Activated B cell treated with CpG ODN at 0.5 μM for 24 hours (primary cell): ENCODE measurements at regions of chr1 and their contacts with region 1.

Region 1: DNA sequence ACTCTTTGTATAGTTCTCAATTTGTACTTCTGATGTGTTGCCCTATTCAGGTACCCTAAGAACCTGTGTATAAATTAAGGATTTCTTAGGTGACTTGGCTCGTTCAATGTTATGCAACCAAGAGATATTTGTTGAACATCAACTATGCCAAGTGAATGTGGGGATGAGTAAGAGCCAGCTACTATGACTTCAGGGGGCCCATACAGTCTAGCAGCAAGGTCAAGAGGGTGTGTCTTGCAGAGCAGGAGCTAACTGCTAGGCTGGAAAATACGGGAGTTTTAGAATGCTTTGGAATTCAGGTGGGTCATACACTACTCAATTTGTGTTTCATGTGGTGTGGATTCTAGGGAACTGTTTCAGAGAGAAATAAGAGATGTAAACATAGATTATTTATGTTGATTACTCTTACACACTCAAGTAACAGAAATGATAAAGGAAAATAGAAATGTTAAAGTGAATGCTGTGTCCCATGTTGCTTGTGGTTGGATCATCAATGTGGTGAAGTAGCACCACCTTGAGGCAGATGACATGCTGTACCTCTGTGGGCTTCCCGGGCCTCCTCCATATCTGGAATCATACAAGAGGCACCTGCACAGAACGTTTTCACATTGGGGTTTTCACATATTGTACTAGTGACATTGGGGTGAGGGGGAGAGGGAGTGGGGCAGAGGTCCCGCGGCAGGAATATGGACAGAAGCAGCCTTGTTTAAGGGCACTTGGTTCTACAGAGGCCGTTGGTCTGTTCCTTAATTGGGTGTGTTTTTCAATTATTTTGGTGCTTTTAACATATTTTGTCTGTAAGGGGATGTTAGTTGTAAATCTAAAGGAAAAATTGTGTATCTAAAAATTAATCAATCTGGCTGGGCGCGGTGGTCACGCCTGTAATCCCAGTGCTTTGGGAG is 12.4 kb downstream of the ARPC5 start:
- DNase-seq: peak; percentile 20
- ATAC-seq: peak; percentile 94
- H3K4me3 Mint-ChIP-seq: no peak overlapping the region
- H3K27ac Mint-ChIP-seq: peak overlapping the region; percentile 50
- H3K4me1 Mint-ChIP-seq: peaks cover 26% of the 10 kb centered on the region
- H3K27me3 Mint-ChIP-seq: no peaks in the 10 kb centered on the region
- CTCF ChIP-seq: no peak

Region 2: DNA sequence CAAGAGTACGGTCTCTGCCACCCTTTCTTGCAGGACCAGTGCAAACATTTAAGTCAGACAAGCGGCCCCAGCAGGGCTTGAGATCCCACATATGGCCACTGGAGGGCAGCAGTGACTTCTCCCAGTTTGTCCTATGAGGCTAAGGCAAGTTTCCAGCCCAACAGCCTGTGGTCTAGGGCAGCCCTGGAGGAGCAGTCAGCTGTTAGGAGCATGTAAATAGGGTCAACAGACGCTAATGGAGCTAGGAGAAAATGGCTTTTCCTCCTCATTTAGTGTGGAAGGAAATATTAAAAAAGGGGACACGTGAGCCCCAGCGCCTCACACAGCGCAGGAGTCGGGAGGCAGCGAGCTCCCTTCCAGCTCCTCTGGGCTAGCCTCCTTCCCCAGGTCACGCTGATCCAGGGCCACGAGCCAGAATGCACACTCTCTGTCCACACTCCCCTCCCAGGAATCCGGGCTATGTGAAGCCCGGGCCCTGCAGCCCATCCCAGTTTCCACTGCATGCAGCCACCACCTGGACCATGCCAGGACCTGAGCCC is 341.5 kb before region 1 on chr1:
- CTCF ChIA-PET with region 1: interaction called, 3 read pairs
- POLR2A ChIA-PET with region 1: no interaction called
- intact Hi-C with region 1: loop called (anchors 1 kb)
- DNase-seq: peak; percentile 57
- ATAC-seq: peak; percentile 67
- H3K4me3 Mint-ChIP-seq: no peak overlapping the region
- H3K27ac Mint-ChIP-seq: no peak overlapping the region
- H3K4me1 Mint-ChIP-seq: no peaks in the 10 kb centered on the region
- H3K27me3 Mint-ChIP-seq: peaks cover 17% of the 10 kb centered on the region
- CTCF ChIP-seq: peak; percentile 63

Region 3: DNA sequence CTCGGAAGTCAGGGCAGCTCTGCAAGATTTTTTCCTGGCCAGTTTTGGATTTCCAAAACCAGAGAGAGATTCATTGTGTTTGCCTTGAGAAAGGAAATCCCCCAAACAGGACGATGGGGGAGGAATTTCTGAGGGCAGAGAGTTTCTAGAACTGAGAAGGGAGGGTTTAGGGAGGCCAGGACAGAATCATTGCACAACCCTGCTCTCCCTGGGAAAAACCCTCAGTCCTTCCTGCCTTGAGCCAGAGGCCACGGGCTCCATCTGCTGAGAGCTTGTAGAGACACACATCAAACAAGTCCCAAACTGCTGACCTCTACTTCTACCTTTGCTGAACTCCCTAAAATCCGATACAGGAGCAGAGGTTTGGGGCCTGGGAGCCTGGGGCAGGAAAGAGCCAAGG is 304.7 kb before region 1 on chr1:
- CTCF ChIA-PET with region 1: no interaction called
- POLR2A ChIA-PET with region 1: no interaction called
- intact Hi-C with region 1: no loop called
- DNase-seq: no peak
- ATAC-seq: no peak
- H3K4me3 Mint-ChIP-seq: no peak overlapping the region
- H3K27ac Mint-ChIP-seq: no peak overlapping the region
- H3K4me1 Mint-ChIP-seq: no peaks in the 10 kb centered on the region
- H3K27me3 Mint-ChIP-seq: peaks cover 20% of the 10 kb centered on the region
- CTCF ChIP-seq: no peak

Region 4: DNA sequence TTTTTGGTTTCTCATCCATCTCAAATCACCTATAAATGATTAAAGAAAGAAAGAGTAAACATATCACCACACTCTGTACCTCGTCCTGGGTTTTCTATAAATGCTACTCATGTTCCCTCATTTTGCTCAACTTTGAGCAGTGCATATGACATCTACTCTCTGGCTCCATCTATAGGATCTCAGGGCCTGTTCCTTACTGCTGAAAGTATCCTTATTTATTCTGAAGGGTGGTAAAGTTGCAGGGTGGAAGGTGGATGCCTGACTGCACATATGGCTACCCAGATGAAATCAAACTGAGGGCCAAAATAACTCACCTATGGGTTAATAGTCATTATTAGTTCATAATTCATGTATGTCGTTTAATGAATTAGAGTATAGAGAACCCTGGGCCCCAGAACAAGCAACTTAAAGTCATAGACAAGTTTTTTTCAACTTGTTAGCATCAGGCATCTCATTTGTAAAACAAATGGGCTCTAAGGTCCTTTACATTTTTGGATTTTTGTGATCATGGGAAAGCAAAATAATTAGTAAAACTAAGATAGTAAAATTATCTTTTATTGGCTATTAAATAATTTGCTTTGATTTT is 79.4 kb before region 1 on chr1:
- CTCF ChIA-PET with region 1: interaction called, 4 read pairs
- POLR2A ChIA-PET with region 1: no interaction called
- intact Hi-C with region 1: loop called (anchors 1 kb)
- DNase-seq: no peak
- ATAC-seq: peak; percentile 71
- H3K4me3 Mint-ChIP-seq: no peak overlapping the region
- H3K27ac Mint-ChIP-seq: no peak overlapping the region
- H3K4me1 Mint-ChIP-seq: peaks cover 30% of the 10 kb centered on the region
- H3K27me3 Mint-ChIP-seq: no peaks in the 10 kb centered on the region
- CTCF ChIP-seq: no peak

Region 5: GRCh38 chr1:183554577-183554976 is 68.6 kb before region 1 on chr1:
- CTCF ChIA-PET with region 1: interaction called, 4 read pairs
- POLR2A ChIA-PET with region 1: no interaction called
- intact Hi-C with region 1: loop called (anchors 2 kb)
- DNase-seq: no peak
- ATAC-seq: peak; percentile 69
- H3K4me3 Mint-ChIP-seq: no peak overlapping the region
- H3K27ac Mint-ChIP-seq: peak overlapping the region; percentile 32
- H3K4me1 Mint-ChIP-seq: peaks cover 21% of the 10 kb centered on the region
- H3K27me3 Mint-ChIP-seq: no peaks in the 10 kb centered on the region
- CTCF ChIP-seq: no peak

Region 6: DNA sequence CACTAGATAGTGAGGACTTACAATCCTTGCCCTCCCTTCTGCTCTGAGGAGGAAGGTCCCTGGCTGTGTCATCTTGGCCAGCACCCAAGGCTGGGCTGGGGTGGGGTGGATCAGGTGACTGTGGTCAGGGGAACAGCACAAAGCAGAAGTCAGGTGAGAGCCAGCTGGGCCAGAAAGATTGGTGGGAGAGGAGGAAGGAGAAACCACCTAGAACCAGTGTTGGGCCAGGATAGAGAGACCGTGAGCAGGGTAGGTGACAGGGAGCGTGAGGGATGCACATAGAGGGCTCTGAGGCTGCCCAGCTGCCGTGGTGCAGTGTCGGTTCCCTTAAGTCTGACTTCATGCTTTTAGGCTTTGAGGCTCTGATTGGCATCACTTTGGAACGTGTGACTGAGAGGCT is 55.6 kb before region 1 on chr1:
- CTCF ChIA-PET with region 1: no interaction called
- POLR2A ChIA-PET with region 1: interaction called, 15 read pairs
- intact Hi-C with region 1: no loop called
- DNase-seq: no peak
- ATAC-seq: peak; percentile 76
- H3K4me3 Mint-ChIP-seq: peak overlapping the region; percentile 42
- H3K27ac Mint-ChIP-seq: peak overlapping the region; percentile 64
- H3K4me1 Mint-ChIP-seq: peaks cover 24% of the 10 kb centered on the region
- H3K27me3 Mint-ChIP-seq: no peaks in the 10 kb centered on the region
- CTCF ChIP-seq: no peak

Region 7: DNA sequence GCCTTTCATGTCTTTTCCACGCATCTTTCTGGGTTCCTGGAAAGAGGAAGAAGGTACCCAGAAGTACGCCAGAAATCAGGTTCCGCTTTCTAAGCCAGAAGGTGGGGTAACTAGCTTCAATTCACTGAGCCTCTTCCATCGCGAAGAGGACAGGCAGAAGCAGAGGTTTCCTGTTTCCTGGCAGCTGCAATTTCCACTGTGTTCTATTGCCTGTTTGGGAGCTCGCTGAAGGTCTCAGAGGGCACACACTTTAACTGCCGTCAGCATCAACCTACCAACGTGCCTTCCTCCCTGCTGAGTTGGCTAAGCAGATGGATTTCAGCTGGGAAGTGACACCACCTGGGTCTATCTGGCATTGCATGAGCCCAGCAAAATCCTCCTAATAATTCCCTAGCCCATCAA is 42.9 kb before region 1 on chr1:
- CTCF ChIA-PET with region 1: interaction called, 6 read pairs
- POLR2A ChIA-PET with region 1: no interaction called
- intact Hi-C with region 1: loop called (anchors 1 kb)
- DNase-seq: no peak
- ATAC-seq: peak; percentile 86
- H3K4me3 Mint-ChIP-seq: peak overlapping the region; percentile 61
- H3K27ac Mint-ChIP-seq: peak overlapping the region; percentile 85
- H3K4me1 Mint-ChIP-seq: peaks cover 32% of the 10 kb centered on the region
- H3K27me3 Mint-ChIP-seq: no peaks in the 10 kb centered on the region
- CTCF ChIP-seq: no peak

Region 8: GRCh38 chr1:183609313-183609712 is 13.8 kb before region 1 on chr1:
- CTCF ChIA-PET with region 1: interaction called, 5 read pairs
- POLR2A ChIA-PET with region 1: interaction called, 4 read pairs
- intact Hi-C with region 1: loop called (anchors 2 kb)
- DNase-seq: no peak
- ATAC-seq: peak; percentile 73
- H3K4me3 Mint-ChIP-seq: peak overlapping the region; percentile 48
- H3K27ac Mint-ChIP-seq: peak overlapping the region; percentile 89
- H3K4me1 Mint-ChIP-seq: peaks cover 47% of the 10 kb centered on the region
- H3K27me3 Mint-ChIP-seq: no peaks in the 10 kb centered on the region
- CTCF ChIP-seq: no peak